ENCODE measurements at regions of chr1 and their contacts with region 1.

Region 1: GRCh38 chr1:35202048-35202719 is 9.2 kb upstream of the SFPQ start:
- DNase-seq: no peak
- H3K4me3 ChIP-seq: no peak overlapping the region
- H3K27me3 ChIP-seq: no peaks in the 10 kb centered on the region
- CTCF ChIP-seq: peak; percentile 92

Region 2: GRCh38 chr1:35220976-35221375 is 18.8 kb after region 1 on chr1:
- CTCF ChIA-PET with region 1: interaction called, 13 read pairs
- POLR2A ChIA-PET with region 1: no interaction called
- DNase-seq: no peak
- H3K4me3 ChIP-seq: no peak overlapping the region
- H3K27me3 ChIP-seq: no peaks in the 10 kb centered on the region
- CTCF ChIP-seq: peak; percentile 33; the same call in 1 of the 2 replicates

Region 3: DNA sequence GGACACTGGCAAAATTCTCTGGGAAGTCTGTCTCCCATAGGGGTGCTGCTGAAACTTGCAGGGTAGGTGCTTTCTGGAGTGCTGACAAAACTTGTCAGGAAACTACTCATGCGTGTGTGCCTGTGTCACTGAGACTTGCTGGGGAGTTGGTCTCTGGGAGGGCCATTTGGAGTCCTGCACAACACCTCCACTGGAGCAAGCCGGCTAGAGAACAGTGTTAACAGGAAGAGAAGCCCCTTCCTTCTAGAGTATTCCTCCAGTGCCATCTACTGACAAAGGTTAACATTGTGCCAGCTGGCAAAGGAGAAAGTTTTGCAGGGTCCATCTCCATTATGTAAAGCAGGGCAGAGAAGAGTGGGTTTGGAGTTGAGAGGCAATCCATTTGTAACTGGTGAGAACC is 96.3 kb after region 1 on chr1:
- CTCF ChIA-PET with region 1: interaction called, 21 read pairs
- POLR2A ChIA-PET with region 1: no interaction called
- DNase-seq: no peak
- H3K4me3 ChIP-seq: no peak overlapping the region
- H3K27me3 ChIP-seq: no peaks in the 10 kb centered on the region
- CTCF ChIP-seq: peak; percentile 46